ENCODE measurements at regions of chr3 and their contacts with region 1.

Region 1: DNA sequence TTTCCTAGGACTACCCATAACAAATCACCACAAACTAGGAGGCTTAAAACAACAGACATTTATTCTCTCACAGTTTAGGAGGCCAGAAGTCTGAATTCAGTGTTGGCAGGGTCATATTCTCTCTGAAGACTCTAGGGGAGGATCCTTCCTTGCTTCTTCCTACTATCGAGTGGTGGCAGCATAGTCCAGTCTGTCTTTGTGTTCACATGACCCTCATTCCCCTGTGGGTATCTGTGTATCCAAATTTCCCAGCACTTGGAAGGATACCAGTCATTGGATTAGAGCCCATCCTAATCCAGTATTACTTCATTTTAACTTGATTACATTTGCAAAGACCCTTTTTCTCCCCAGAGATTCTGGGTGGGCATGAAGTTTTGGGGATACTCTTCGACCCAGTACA is 63.8 kb downstream of the GMPS start:
- DNase-seq: no peak
- H3K4me3 ChIP-seq: no peak overlapping the region
- H3K27ac ChIP-seq: no peak overlapping the region
- H3K4me1 ChIP-seq: no peaks in the 10 kb centered on the region
- H3K27me3 ChIP-seq: no peaks in the 10 kb centered on the region
- CTCF ChIP-seq: no peak

Region 2: GRCh38 chr3:155908086-155908485 is 26.1 kb before region 1 on chr3:
- CTCF ChIA-PET with region 1: no interaction called
- POLR2A ChIA-PET with region 1: no interaction called
- intact Hi-C with region 1: loop called (anchors 5 kb)
- DNase-seq: no peak
- H3K4me3 ChIP-seq: no peak overlapping the region
- H3K27ac ChIP-seq: no peak overlapping the region
- H3K4me1 ChIP-seq: no peaks in the 10 kb centered on the region
- H3K27me3 ChIP-seq: no peaks in the 10 kb centered on the region
- CTCF ChIP-seq: no peak

Region 3: DNA sequence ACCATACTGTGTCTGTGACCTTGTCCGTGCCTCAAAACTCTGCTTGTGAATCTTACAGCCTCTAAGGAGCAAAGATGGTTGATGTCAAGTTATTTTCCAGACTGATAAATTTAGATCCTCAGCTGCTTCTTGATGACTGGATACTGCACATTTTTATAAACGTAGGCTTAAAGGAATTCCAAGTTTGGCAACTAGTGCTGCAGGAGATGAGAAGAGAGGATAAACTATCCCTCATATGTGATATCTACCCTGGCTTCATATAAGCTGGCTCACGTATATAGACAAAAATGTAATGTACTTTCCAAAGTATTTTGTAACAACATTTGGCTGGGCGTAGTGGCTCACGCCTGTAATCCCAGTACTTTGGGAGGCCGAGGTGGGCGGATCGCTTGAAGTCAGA is 25.8 kb after region 1 on chr3:
- CTCF ChIA-PET with region 1: no interaction called
- POLR2A ChIA-PET with region 1: no interaction called
- intact Hi-C with region 1: loop called (anchors 1 kb)
- DNase-seq: no peak
- H3K4me3 ChIP-seq: no peak overlapping the region
- H3K27ac ChIP-seq: no peak overlapping the region
- H3K4me1 ChIP-seq: no peaks in the 10 kb centered on the region
- H3K27me3 ChIP-seq: no peaks in the 10 kb centered on the region
- CTCF ChIP-seq: no peak

Region 4: GRCh38 chr3:156151824-156152428 is 217.7 kb after region 1 on chr3:
- CTCF ChIA-PET with region 1: no interaction called
- POLR2A ChIA-PET with region 1: no interaction called
- intact Hi-C with region 1: no loop called
- DNase-seq: peak; percentile 49 to 62
- H3K4me3 ChIP-seq: no peak overlapping the region
- H3K27ac ChIP-seq: no peak overlapping the region
- H3K4me1 ChIP-seq: no peaks in the 10 kb centered on the region
- H3K27me3 ChIP-seq: no peaks in the 10 kb centered on the region
- CTCF ChIP-seq: peak; percentile 92

Measured in PC-9 (cell line).